Prostate gland (tissue), 2 donors: ENCODE measurements at regions of chr6 and their contacts with region 1.

Region 1: DNA sequence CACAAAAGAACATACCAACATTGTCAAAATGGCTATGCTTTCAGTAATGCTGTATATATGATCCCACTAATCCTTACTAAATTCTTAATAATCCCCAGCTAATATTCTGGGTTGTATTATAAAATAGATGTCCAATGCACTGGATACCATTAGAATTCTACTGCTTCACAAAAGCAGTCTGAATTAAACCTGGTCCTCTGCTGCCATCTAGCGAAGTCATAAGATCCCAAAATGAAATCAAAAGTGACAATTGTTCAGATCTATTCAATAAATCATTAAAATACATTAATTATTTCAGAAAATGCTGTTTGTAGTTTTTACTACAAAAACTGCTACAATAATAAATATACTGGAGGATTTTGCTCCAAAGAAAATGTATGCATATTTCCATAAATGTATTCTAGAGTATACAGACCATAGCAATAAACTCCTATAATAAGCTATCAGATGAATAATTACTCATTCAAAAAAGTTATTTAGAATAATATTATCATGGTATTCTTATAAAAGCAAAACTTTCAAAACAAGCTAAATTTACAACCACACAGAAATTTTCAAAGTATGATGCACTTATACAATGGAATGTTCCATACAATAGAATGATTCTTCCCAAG is 92.6 kb downstream of the RNGTT start:
- DNase-seq: peak; percentile 28
- H3K4me3 ChIP-seq: no peak overlapping the region
- H3K27ac ChIP-seq: no peak overlapping the region
- H3K4me1 ChIP-seq: no peaks in the 10 kb centered on the region
- H3K27me3 ChIP-seq: no peaks in the 10 kb centered on the region
- CTCF ChIP-seq: peak in 3 of 4 experiments; percentile 53 to 77 (median 66)
- POLR2A ChIP-seq: no peak

Region 2: GRCh38 chr6:87832025-87832825 is 1038.6 kb before region 1 on chr6:
- intact Hi-C with region 1: loop called (anchors 10 kb)
- DNase-seq: no peak
- H3K4me3 ChIP-seq: peak overlapping the region; percentile 15 to 29
- H3K27ac ChIP-seq: peak overlapping the region in 1 of 2 donors; percentile 38
- H3K4me1 ChIP-seq: no peaks in the 10 kb centered on the region
- H3K27me3 ChIP-seq: no peaks in the 10 kb centered on the region
- CTCF ChIP-seq: peak in 3 of 4 experiments; percentile 30 to 51 (median 48)
- POLR2A ChIP-seq: no peak

Region 3: DNA sequence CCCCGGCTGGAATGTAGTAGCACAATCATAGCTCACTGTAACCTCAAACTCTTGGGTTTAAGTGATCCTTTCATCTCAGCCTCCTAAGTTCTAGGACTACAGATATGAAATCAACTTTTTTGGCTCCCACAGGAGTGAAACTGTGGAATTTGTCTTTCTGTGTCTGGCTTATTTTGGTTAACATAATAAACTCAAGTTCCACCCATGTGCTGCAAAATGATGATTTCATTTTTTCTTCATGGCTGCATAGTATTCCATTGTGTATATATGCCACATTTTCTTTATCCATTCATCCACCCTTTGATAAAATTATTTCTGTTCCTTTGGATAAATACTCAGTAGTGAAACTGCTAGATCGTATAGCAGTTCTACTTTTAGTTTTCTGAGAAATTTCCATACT is 62.7 kb after region 1 on chr6:
- intact Hi-C with region 1: no loop called
- DNase-seq: no peak
- H3K4me3 ChIP-seq: no peak overlapping the region
- H3K27ac ChIP-seq: no peak overlapping the region
- H3K4me1 ChIP-seq: no peaks in the 10 kb centered on the region
- H3K27me3 ChIP-seq: no peaks in the 10 kb centered on the region
- CTCF ChIP-seq: no peak
- POLR2A ChIP-seq: no peak

Region 4: GRCh38 chr6:90350689-90351554 is 1480.1 kb after region 1 on chr6:
- intact Hi-C with region 1: no loop called
- DNase-seq: no peak
- H3K4me3 ChIP-seq: no peak overlapping the region
- H3K27ac ChIP-seq: no peak overlapping the region
- H3K4me1 ChIP-seq: no peaks in the 10 kb centered on the region
- H3K27me3 ChIP-seq: no peaks in the 10 kb centered on the region
- CTCF ChIP-seq: no peak
- POLR2A ChIP-seq: no peak